ENCODE measurements at regions of chr14 and their contacts with region 1.

Region 1: DNA sequence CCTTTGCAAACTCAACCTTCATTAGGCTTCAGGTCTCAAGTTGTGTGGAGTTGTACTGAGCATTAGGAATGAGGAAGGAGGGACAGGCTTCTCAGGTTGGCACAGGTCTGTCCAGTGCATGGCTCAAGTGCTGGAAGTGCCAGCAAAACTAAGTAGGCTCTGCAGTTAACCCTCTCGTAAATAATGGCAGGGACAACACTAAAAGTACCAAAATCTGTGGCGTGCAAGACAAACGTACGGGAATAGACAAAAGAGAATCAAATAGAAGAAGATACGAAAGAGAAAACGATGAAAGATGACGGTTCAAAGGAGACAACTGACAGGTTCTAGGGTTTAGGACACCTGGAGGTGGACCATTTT is 612 bp downstream of the TRAPPC6B start:
- DNase-seq: no peak

Region 2: DNA sequence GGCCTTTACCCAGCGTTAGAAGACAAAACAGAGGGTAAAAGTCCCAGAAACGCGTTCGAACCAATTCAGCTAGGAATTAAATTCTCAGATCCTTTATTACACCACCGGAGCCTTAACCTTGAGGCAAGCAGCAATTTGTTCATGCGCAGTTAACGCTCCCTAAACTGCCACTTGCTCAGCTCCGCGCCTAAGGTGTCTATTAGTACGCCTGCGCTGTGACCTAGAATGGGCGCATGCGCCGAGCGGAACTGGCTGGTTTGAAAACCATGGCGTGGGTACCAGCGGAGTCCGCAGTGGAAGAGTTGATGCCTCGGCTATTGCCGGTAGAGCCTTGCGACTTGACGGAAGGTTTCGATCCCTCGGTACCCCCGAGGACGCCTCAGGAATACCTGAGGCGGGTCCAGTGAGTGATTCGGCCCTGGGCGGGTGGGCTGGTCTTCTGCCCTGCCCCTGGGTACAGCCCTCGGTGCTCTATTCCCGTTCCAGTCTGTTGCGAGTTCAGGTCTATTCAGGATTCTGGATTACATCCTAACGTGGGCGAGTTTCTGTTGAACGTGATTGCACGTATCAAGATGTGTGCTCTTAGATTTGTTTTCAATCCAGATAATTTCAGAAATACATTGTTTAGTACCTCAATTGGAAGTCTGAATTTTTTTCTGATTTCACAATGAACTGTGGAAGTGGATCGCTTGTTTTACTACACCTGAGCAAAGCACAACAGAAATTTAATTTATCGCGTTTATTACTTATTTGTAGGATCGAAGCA is 55.3 kb before region 1 on chr14 and contains the start of gene GEMIN2:
- intact Hi-C with region 1: loop called in 1 of 2 experiments (anchors 10 kb)
- DNase-seq: peak; percentile 98
- total RNA-seq, gene GEMIN2: 9.6 to 12.7 TPM

Region 3: GRCh38 chr14:39186941-39187525 is 17.5 kb after region 1 on chr14:
- intact Hi-C with region 1: no loop called
- DNase-seq: no peak